CD4-positive, alpha-beta memory T cell (primary cell): ENCODE measurements at regions of chr3 and their contacts with region 1.

Region 1: GRCh38 chr3:152183473-152183872 is 85.3 kb upstream of the MBNL1 start:
- DNase-seq: peak; percentile 43 to 56 (median 55)
- H3K4me3 ChIP-seq: no peak overlapping the region
- H3K4me3 Mint-ChIP-seq: peak overlapping the region in 7 of 8 donors; percentile 7 to 50 (median 32)
- H3K27ac ChIP-seq: no peak overlapping the region
- H3K27ac Mint-ChIP-seq: peak overlapping the region in 5 of 7 donors; percentile 8 to 83 (median 61)
- H3K4me1 ChIP-seq: peaks cover 53% of the 10 kb centered on the region
- H3K4me1 Mint-ChIP-seq: peaks cover 29 to 48% (median 39%) of the 10 kb centered on the region in 4 donors
- H3K27me3 ChIP-seq: no peaks in the 10 kb centered on the region
- H3K27me3 Mint-ChIP-seq: no peaks in the 10 kb centered on the region

Region 2: DNA sequence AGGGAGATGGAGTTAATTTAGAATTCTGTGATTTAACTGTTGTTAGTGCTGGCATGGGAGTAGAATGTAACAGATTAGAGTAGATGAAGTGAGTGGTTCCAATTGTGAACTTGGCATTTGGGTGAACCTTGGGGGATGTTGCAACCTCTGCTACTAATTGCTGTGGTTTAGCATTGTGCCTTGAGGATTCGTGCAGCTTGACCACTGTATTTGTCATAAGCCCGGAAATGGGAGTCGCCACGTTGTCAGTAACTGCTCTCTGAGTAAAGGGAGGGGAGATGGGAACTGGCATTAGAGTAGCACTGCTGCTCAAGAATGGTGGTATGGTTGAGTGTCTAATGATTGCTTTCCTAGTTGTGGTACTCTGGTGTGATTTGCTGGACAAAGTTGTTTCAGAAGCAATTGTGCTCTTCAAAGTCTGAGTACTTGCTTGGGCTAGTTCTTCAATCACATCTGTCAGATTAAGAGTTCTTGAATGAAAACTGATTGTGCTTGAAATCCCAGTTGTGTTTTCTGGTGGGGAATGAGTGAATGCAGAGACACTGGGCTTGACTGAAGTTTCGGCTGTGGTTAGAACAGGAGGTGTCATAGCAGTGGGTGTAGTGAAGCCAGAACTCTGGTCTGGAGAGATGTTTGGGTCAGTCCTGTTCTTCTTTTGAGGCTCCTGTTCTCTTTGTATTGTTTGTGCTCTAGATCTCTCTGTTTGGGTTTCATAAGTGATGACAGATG is 738.0 kb before region 1 on chr3:
- CTCF ChIA-PET with region 1: no interaction called
- POLR2A ChIA-PET with region 1: no interaction called
- intact Hi-C with region 1: no loop called
- DNase-seq: no peak
- H3K4me3 ChIP-seq: no peak overlapping the region
- H3K4me3 Mint-ChIP-seq: no peak overlapping the region
- H3K27ac ChIP-seq: no peak overlapping the region
- H3K27ac Mint-ChIP-seq: no peak overlapping the region
- H3K4me1 ChIP-seq: no peaks in the 10 kb centered on the region
- H3K4me1 Mint-ChIP-seq: no peaks in the 10 kb centered on the region
- H3K27me3 ChIP-seq: no peaks in the 10 kb centered on the region
- H3K27me3 Mint-ChIP-seq: peaks cover 6 to 17% of the 10 kb centered on the region in 2 donors

Region 3: GRCh38 chr3:152151216-152151876 is 32.1 kb before region 1 on chr3:
- CTCF ChIA-PET with region 1: no interaction called
- POLR2A ChIA-PET with region 1: no interaction called
- intact Hi-C with region 1: no loop called
- DNase-seq: no peak
- H3K4me3 ChIP-seq: no peak overlapping the region
- H3K4me3 Mint-ChIP-seq: no peak overlapping the region
- H3K27ac ChIP-seq: no peak overlapping the region
- H3K27ac Mint-ChIP-seq: peak overlapping the region in 1 of 7 donors; percentile 14
- H3K4me1 ChIP-seq: no peaks in the 10 kb centered on the region
- H3K4me1 Mint-ChIP-seq: peaks cover 0 to 4% (median 2%) of the 10 kb centered on the region in 4 donors
- H3K27me3 ChIP-seq: no peaks in the 10 kb centered on the region
- H3K27me3 Mint-ChIP-seq: peaks cover 0 to 2% of the 10 kb centered on the region in 2 donors

Region 4: DNA sequence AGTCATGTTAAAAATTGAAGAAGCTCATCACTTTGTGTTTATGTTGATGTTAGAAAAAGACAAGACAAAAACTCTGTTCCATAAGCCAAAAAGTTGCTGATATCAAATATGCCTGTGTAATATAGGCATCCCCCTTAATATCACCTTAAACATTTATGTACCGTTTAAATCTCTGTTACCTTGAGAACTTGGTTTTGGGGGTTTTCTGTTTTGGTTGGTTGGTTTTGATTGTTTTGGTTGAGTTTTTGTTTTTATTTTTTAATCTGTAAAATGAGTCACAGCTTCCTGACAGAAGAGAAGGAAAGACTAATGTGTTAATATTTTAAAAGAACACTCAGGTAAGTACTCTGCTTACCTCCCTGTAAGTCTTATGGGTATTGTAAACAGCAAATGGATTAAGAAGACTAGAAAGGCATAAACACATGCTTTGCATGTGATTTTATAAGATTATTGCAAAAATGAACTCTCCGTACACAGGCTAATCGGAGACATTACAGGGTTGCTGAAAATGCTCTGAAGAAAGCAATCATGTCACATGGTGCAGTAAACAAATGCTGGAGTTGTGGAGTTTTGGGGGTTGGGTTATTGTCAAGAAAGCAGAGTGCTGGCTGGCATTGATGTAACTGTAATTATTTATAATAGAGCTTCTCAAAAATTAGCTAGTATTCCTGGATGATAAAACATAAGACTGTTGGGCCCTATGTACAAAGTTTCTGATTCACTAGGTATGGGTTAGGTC is 15.8 kb after region 1 on chr3:
- CTCF ChIA-PET with region 1: interaction called, 17 read pairs
- POLR2A ChIA-PET with region 1: interaction called, 40 read pairs
- intact Hi-C with region 1: no loop called
- DNase-seq: peak in 1 of 5 donors; percentile 33
- H3K4me3 ChIP-seq: peak overlapping the region; percentile 35 to 55
- H3K4me3 Mint-ChIP-seq: peak overlapping the region; percentile 74 to 93 (median 80)
- H3K27ac ChIP-seq: peak overlapping the region; percentile 84
- H3K27ac Mint-ChIP-seq: peak overlapping the region; percentile 90 to 99 (median 94)
- H3K4me1 ChIP-seq: peaks cover 85% of the 10 kb centered on the region
- H3K4me1 Mint-ChIP-seq: peaks cover 47 to 79% (median 64%) of the 10 kb centered on the region in 4 donors
- H3K27me3 ChIP-seq: no peaks in the 10 kb centered on the region
- H3K27me3 Mint-ChIP-seq: no peaks in the 10 kb centered on the region

Region 5: GRCh38 chr3:152241142-152242017 is 57.9 kb after region 1 on chr3:
- CTCF ChIA-PET with region 1: interaction called, 11 read pairs
- POLR2A ChIA-PET with region 1: interaction called, 38 read pairs
- intact Hi-C with region 1: no loop called
- DNase-seq: no peak
- H3K4me3 ChIP-seq: peak overlapping the region in 1 of 2 donors; percentile 17
- H3K4me3 Mint-ChIP-seq: peak overlapping the region; percentile 69 to 97 (median 78)
- H3K27ac ChIP-seq: peak overlapping the region; percentile 69
- H3K27ac Mint-ChIP-seq: peak overlapping the region; percentile 82 to 97 (median 92)
- H3K4me1 ChIP-seq: peaks cover 56% of the 10 kb centered on the region
- H3K4me1 Mint-ChIP-seq: peaks cover 46 to 81% (median 52%) of the 10 kb centered on the region in 4 donors
- H3K27me3 ChIP-seq: no peaks in the 10 kb centered on the region
- H3K27me3 Mint-ChIP-seq: no peaks in the 10 kb centered on the region

Region 6: DNA sequence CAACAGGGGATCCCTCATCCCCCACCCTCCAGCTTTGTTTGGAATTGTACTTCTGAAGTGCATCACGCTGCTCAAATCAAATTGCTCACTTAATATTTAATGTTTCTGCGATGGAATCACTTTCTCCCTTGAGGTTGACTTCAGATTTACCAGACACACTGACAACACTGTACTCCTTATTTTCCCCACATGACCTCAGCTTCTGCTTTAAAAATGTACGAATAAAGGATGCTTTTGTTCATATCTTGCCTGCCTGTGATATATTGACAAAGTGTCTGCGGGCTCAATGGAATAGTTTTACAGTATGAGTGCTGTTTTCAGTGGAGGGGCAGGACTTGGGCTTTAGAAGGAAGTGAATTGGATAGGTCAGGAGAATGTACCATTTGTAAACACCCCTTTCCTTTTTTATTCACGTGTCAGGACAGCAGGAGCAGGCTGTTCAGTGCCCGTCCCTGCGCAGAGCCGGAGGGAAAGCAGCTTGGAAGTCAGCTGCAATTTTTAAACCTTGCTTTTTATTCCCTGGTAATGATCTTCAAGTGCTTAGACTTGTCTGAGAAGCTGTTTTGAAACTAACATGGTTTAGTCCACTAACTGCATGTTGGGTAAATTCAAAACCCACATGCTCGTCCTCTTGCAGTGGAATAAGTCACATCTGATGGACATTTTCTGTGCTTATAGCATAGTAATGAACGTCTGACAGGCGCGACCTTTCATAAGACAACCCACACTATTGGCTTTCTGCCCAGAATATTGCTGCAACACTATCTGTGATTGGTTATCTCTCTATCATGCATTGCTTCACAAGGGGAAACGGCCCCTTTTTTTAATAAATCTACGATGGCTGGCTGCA is 115.1 kb after region 1 on chr3:
- CTCF ChIA-PET with region 1: interaction called, 10 read pairs
- POLR2A ChIA-PET with region 1: interaction called, 4 read pairs
- intact Hi-C with region 1: no loop called
- DNase-seq: peak; percentile 81 to 84 (median 82)
- H3K4me3 ChIP-seq: peak overlapping the region; percentile 23 to 29
- H3K4me3 Mint-ChIP-seq: peak overlapping the region; percentile 64 to 87 (median 78)
- H3K27ac ChIP-seq: peak overlapping the region; percentile 54
- H3K27ac Mint-ChIP-seq: peak overlapping the region; percentile 88 to 97 (median 92)
- H3K4me1 ChIP-seq: peaks cover 98% of the 10 kb centered on the region
- H3K4me1 Mint-ChIP-seq: peaks cover 62 to 82% (median 72%) of the 10 kb centered on the region in 4 donors
- H3K27me3 ChIP-seq: no peaks in the 10 kb centered on the region
- H3K27me3 Mint-ChIP-seq: no peaks in the 10 kb centered on the region

Region 7: GRCh38 chr3:152444029-152444641 is 260.7 kb after region 1 on chr3:
- CTCF ChIA-PET with region 1: interaction called, 126 read pairs
- POLR2A ChIA-PET with region 1: interaction called, 11 read pairs
- intact Hi-C with region 1: loop called (anchors 1 kb)
- DNase-seq: peak in 4 of 5 donors; percentile 33 to 43 (median 38)
- H3K4me3 ChIP-seq: no peak overlapping the region
- H3K4me3 Mint-ChIP-seq: peak overlapping the region in 4 of 8 donors; percentile 1 to 47 (median 12)
- H3K27ac ChIP-seq: peak overlapping the region; percentile 6
- H3K27ac Mint-ChIP-seq: peak overlapping the region in 6 of 7 donors; percentile 17 to 92 (median 56)
- H3K4me1 ChIP-seq: peaks cover 89% of the 10 kb centered on the region
- H3K4me1 Mint-ChIP-seq: peaks cover 49 to 77% (median 60%) of the 10 kb centered on the region in 4 donors
- H3K27me3 ChIP-seq: no peaks in the 10 kb centered on the region
- H3K27me3 Mint-ChIP-seq: no peaks in the 10 kb centered on the region

Region 8: DNA sequence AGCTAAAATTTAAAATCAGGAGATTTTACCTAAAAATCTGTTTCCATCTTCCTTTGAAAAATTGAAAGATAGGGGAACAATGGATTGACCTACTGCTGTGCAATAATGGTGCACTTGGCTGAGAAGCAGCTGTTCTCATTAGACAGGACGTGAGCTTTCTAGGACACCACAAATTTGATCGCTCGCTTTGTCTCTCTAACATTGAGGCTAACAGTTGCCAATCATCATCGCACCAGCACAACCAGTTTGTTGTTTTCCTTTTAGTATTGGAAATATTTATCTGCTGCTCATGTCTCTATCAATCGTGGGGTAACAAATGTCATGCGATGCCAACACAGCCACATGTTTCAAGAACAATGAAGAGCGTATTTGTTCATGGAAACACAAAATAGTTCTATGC is 422.7 kb after region 1 on chr3:
- CTCF ChIA-PET with region 1: no interaction called
- POLR2A ChIA-PET with region 1: no interaction called
- intact Hi-C with region 1: no loop called
- DNase-seq: no peak
- H3K4me3 ChIP-seq: no peak overlapping the region
- H3K4me3 Mint-ChIP-seq: no peak overlapping the region
- H3K27ac ChIP-seq: no peak overlapping the region
- H3K27ac Mint-ChIP-seq: no peak overlapping the region
- H3K4me1 ChIP-seq: no peaks in the 10 kb centered on the region
- H3K4me1 Mint-ChIP-seq: no peaks in the 10 kb centered on the region
- H3K27me3 ChIP-seq: no peaks in the 10 kb centered on the region
- H3K27me3 Mint-ChIP-seq: peaks cover 3 to 10% of the 10 kb centered on the region in 2 donors

Region 9: GRCh38 chr3:154105218-154105975 is 1921.9 kb after region 1 on chr3:
- CTCF ChIA-PET with region 1: no interaction called
- POLR2A ChIA-PET with region 1: no interaction called
- intact Hi-C with region 1: no loop called
- DNase-seq: no peak
- H3K4me3 ChIP-seq: no peak overlapping the region
- H3K4me3 Mint-ChIP-seq: no peak overlapping the region
- H3K27ac ChIP-seq: no peak overlapping the region
- H3K27ac Mint-ChIP-seq: no peak overlapping the region
- H3K4me1 ChIP-seq: no peaks in the 10 kb centered on the region
- H3K4me1 Mint-ChIP-seq: no peaks in the 10 kb centered on the region
- H3K27me3 ChIP-seq: no peaks in the 10 kb centered on the region
- H3K27me3 Mint-ChIP-seq: peaks cover 0 to 8% of the 10 kb centered on the region in 2 donors